ENCODE measurements at regions of chr14 and their contacts with region 1.

Region 1: DNA sequence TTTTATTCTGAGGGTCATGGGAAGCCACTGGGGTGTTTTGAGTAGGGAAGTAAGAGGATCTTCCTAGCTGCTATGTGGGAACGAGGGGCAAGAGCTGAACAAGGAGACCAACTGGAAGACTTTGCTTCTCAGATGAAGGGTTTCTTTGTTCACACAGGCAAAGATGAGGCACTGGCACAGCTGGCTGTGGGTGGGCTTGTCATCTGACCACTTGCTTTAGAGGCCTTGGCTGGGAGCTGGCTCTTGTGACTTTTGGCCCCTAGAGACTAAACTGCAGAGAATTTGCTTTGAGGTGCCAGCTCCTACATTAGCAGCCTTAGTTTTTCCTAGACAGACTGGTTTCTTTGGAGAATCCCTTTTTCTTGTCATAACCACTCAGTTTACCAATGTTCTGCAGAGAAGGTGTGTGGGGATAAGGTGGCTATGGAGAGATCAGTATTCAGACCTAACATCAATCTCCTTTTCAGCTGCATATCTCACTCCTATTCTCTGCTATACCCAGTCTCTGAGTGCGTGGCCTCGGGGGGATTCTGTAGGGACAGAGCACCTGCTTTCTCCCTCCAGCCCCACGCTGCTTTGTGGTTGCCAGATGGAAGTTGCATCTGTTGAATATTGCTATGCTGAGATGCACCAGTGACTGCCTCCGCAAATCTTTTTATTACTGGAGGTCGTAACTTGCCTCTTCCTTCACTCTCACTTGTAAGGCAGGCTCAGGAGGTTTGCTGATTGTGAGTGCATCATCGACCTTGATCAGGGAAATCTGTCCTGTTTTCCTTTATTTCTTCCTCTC is 12.7 kb downstream of the PPP2R5C start:
- DNase-seq: no peak
- ATAC-seq: no peak
- H3K4me3 ChIP-seq: no peak overlapping the region
- H3K27ac ChIP-seq: no peak overlapping the region
- H3K4me1 ChIP-seq: no peaks in the 10 kb centered on the region
- H3K27me3 ChIP-seq: no peaks in the 10 kb centered on the region

Region 2: GRCh38 chr14:101823511-101824120 is 49.4 kb after region 1 on chr14:
- intact Hi-C with region 1: loop called in 2 of 4 experiments (anchors 10 kb)
- DNase-seq: peak in 1 of 3 donors; percentile 74
- ATAC-seq: peak; percentile 56 to 84
- H3K4me3 ChIP-seq: peak overlapping the region; percentile 30
- H3K27ac ChIP-seq: peak overlapping the region; percentile 64
- H3K4me1 ChIP-seq: peaks cover 14% of the 10 kb centered on the region
- H3K27me3 ChIP-seq: no peaks in the 10 kb centered on the region

Region 3: GRCh38 chr14:101927859-101928258 is 153.7 kb after region 1 on chr14:
- intact Hi-C with region 1: loop called in 1 of 4 experiments (anchors 10 kb)
- DNase-seq: peak; percentile 93 to 96 (median 94)
- ATAC-seq: peak; percentile 97
- H3K4me3 ChIP-seq: no peak overlapping the region
- H3K27ac ChIP-seq: no peak overlapping the region
- H3K4me1 ChIP-seq: peaks cover 2% of the 10 kb centered on the region
- H3K27me3 ChIP-seq: no peaks in the 10 kb centered on the region

Region 4: DNA sequence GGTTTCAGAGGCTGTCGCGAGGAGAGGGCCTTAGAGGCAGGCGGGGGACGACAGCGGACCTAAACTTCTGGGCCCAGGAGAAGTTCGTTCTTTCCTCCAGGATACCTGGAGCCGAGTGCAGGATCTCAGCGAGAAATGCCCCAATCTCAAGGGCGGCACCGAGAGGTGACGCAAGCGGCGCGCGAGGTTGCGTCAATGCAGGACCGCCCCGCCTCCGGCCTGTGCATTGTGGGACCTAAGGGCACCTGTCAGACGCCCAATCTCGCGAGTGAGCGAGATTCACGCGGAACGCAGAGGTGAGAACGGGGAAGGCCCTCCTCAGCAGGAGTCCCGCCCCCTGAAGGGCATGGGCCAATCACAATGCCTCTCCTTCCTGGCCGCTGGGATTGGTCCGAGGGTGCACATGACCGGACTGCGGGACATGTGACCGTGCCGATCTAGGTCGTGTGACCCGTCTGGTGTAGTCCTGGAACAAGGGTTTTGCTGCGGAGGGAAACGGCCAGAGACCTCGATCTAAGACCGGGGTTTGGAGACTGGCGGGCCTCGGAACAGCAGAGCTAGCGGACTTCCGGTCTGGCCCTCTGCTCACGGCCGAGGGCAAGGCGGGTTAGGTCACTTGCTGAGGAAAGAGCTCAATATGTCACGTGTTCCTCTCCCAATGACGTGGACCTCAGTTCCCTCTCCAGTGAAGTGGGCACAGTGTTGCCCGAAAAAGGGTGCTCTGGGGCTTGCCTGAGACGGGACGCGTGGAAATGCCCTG is 173.9 kb after region 1 on chr14:
- intact Hi-C with region 1: loop called in 1 of 4 experiments (anchors 5 kb)
- DNase-seq: peak; percentile 100
- ATAC-seq: peak; percentile 99
- H3K4me3 ChIP-seq: peak overlapping the region; percentile 76
- H3K27ac ChIP-seq: peak overlapping the region; percentile 98
- H3K4me1 ChIP-seq: peaks cover 8% of the 10 kb centered on the region
- H3K27me3 ChIP-seq: no peaks in the 10 kb centered on the region

Region 5: GRCh38 chr14:102063091-102063802 is 289.0 kb after region 1 on chr14:
- intact Hi-C with region 1: no loop called
- DNase-seq: peak; percentile 90 to 96 (median 95)
- ATAC-seq: peak; percentile 96
- H3K4me3 ChIP-seq: no peak overlapping the region
- H3K27ac ChIP-seq: no peak overlapping the region
- H3K4me1 ChIP-seq: no peaks in the 10 kb centered on the region
- H3K27me3 ChIP-seq: no peaks in the 10 kb centered on the region

Measured in right cardiac atrium (tissue), 5 donors.